ENCODE measurements at regions of chr18 and their contacts with region 1.

Region 1: GRCh38 chr18:37450434-37451132 is 115.0 kb downstream of the CELF4 start:
- DNase-seq: no peak
- ATAC-seq: no peak

Region 2: DNA sequence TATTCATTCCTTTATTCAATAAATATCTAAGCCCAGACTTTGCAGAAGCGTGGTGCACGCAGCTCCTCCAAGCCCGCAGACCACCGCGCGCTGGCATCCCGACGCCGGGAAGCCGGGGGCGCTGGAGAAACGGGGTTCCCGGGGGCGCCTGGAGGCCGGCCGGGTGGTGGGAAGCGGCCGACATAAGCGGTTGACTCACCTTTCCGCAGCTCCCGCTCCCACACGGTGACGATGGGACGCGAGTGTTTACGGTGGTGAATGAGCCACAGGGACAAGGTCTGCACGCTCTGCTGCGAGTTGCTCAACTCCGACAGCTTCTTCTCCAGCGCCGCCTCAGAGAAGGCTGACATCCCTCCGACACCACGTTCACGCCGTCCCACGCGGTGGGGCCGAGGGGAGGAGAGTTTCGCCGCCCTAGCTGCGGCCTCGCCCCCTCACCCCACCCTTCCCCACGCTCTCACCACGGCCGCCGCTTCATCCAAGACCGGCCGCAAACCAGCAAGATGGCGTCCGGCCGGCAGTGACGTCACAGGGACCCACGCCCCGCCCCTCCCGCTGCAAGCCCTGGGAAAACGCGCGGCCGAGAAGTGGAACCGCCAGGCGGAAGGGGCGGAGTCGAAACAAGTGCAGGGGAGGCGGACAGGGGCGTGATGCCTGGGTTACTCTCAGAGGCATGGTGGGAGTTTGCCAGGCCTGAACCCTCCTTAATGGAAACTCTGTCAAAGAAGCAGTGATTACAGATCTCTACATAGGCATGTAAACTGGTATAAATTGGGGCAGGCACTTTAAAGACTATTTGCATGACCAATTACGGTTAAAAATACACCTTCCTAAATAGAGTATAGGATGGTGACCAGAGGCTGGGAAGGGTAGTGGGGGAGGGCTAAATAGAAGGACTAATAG is 1383.3 kb before region 1 on chr18 and contains the start of gene RPRD1A:
- intact Hi-C with region 1: no loop called
- DNase-seq: peak; percentile 98
- ATAC-seq: peak; percentile 99
- total RNA-seq, gene RPRD1A: 58.1 TPM

Region 3: DNA sequence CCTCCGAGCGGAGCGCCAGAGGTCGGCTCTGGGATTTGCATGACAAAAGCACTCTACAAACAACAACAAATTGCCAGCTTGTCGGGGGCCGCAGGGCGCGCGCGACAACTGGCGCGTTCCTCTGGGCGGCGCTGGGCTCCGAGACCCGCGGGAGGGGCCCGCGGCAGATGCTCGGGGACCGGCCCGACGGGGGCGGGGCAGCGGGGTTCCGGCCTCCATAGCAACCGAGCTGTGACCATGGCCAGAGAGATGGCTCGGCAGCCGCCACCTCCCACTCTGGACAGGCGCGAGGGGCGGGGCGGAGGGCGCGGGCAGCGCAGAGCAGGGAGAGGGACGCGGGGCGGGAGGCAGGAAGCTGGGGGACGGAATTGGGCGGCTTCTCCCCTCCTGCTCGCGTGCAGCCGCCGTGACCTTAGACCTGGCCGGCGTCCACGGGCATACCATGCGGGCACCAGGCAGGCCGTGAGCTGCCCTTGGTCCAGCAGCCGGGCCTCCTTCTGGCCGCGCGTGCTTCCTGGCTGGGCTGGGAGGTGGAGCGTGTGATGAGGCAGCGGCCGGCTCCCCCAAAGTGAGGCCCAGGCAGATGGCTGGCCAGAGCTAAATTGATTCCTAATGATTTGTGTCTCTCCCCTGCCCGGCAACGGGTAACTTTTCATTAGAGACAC is 56.5 kb before region 1 on chr18:
- intact Hi-C with region 1: loop called (anchors 10 kb)
- DNase-seq: peak; percentile 83
- ATAC-seq: peak; percentile 86

Measured in sciatic nerve (tissue), 2 donors.